CD4-positive, alpha-beta T cell (primary cell): ENCODE measurements at regions of chr4 and their contacts with region 1.

Region 1: DNA sequence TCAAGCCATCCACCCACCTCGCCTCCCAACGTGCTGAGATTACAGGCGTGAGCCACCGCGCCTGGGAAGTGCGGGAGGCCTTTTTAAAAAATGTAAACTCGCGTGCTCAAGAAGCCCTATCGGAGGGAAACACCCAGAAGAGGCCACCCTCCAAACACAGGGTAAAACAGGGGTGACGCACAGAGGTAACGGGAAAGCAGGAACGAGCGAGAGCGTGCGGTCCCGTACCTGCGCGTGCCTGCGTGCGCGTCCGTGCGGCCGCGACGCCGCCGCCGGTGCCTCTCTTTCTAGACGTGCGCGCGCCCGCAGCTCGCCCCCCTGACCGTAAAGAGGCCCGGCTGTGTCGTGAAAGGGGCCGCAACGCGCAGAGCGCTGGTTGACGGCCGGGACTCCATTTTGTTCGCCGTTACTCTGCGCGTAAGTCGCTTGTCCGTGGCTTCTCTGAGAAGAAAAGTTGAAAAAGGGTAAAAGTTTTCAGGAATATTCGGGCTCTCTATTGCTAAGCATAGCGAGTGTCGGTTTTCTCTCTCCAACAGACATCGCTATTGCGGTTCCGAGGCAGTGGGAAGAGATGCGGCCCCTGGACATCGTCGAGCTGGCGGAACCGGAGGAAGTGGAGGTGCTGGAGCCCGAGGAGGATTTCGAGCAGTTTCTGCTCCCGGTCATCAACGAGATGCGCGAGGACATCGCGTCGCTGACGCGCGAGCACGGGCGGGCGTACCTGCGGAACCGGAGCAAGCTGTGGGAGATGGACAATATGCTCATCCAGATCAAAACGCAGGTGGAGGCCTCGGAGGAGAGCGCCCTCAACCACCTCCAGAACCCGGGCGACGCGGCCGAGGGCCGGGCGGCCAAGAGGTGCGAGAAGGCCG is at the start of gene MRFAP1:
- DNase-seq: peak; percentile 90 to 99 (median 94)
- ATAC-seq: peak; percentile 78
- H3K4me3 ChIP-seq: peak within 1 kb of the TSS; percentile 77
- H3K4me3 Mint-ChIP-seq: peak within 1 kb of the TSS; percentile 100
- H3K27ac ChIP-seq: peak within 1 kb of the TSS; percentile 93 to 98
- H3K27ac Mint-ChIP-seq: peak within 1 kb of the TSS; percentile 99
- H3K4me1 ChIP-seq: peaks cover 38% of the 10 kb centered on the region
- H3K4me1 Mint-ChIP-seq: peaks cover 45% of the 10 kb centered on the region
- H3K27me3 ChIP-seq: no peaks in the 10 kb centered on the region
- H3K27me3 Mint-ChIP-seq: no peaks in the 10 kb centered on the region
- CTCF ChIP-seq: no peak
- total RNA-seq, gene MRFAP1: 172 to 181 TPM

Region 2: DNA sequence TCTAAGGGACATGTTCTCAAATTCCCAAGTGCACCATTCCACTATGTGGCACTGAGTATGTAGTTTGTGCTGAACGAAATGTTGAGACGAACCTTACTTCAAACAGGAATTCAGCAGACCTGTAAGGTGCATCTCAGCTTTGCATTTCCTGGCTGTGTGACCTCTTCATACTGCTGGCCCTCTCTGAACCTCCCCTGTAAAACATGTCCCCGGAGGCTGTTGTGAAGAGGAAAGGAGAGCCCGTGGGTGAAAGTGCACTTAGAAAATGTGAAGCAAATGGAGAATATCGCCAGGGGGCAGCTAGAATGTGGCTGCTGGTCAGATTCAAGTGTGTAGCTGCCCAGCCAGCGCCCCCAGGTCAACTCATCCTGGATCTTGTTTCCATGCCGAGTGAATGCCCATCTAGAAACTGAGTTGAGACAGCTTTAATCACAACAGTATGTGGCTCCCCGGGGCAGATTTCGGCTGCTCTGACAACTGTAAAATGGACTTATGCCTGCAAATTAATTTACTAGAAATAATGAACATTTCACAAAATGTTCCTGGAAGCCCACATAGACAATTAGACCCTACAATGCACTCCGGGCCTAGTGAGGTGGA is 1195.5 kb before region 1 on chr4:
- CTCF ChIA-PET with region 1: no interaction called
- POLR2A ChIA-PET with region 1: no interaction called
- intact Hi-C with region 1: no loop called
- DNase-seq: no peak
- ATAC-seq: no peak
- H3K4me3 ChIP-seq: no peak overlapping the region
- H3K4me3 Mint-ChIP-seq: no peak overlapping the region
- H3K27ac ChIP-seq: no peak overlapping the region
- H3K27ac Mint-ChIP-seq: no peak overlapping the region
- H3K4me1 ChIP-seq: no peaks in the 10 kb centered on the region
- H3K4me1 Mint-ChIP-seq: no peaks in the 10 kb centered on the region
- H3K27me3 ChIP-seq: no peaks in the 10 kb centered on the region
- H3K27me3 Mint-ChIP-seq: no peaks in the 10 kb centered on the region
- CTCF ChIP-seq: no peak

Region 3: GRCh38 chr4:6275351-6275750 is 365.2 kb before region 1 on chr4:
- CTCF ChIA-PET with region 1: no interaction called
- POLR2A ChIA-PET with region 1: no interaction called
- intact Hi-C with region 1: no loop called
- DNase-seq: no peak
- ATAC-seq: no peak
- H3K4me3 ChIP-seq: no peak overlapping the region
- H3K4me3 Mint-ChIP-seq: no peak overlapping the region
- H3K27ac ChIP-seq: no peak overlapping the region
- H3K27ac Mint-ChIP-seq: no peak overlapping the region
- H3K4me1 ChIP-seq: peaks cover 26% of the 10 kb centered on the region
- H3K4me1 Mint-ChIP-seq: peaks cover 16% of the 10 kb centered on the region
- H3K27me3 ChIP-seq: no peaks in the 10 kb centered on the region
- H3K27me3 Mint-ChIP-seq: no peaks in the 10 kb centered on the region
- CTCF ChIP-seq: no peak

Region 4: GRCh38 chr4:6452897-6453687 is 187.4 kb before region 1 on chr4:
- CTCF ChIA-PET with region 1: no interaction called
- POLR2A ChIA-PET with region 1: no interaction called
- intact Hi-C with region 1: no loop called
- DNase-seq: no peak
- ATAC-seq: no peak
- H3K4me3 ChIP-seq: no peak overlapping the region
- H3K4me3 Mint-ChIP-seq: no peak overlapping the region
- H3K27ac ChIP-seq: no peak overlapping the region
- H3K27ac Mint-ChIP-seq: no peak overlapping the region
- H3K4me1 ChIP-seq: no peaks in the 10 kb centered on the region
- H3K4me1 Mint-ChIP-seq: no peaks in the 10 kb centered on the region
- H3K27me3 ChIP-seq: peaks cover 0 to 4% of the 10 kb centered on the region in 2 experiments
- H3K27me3 Mint-ChIP-seq: peaks cover 33% of the 10 kb centered on the region
- CTCF ChIP-seq: no peak

Region 5: DNA sequence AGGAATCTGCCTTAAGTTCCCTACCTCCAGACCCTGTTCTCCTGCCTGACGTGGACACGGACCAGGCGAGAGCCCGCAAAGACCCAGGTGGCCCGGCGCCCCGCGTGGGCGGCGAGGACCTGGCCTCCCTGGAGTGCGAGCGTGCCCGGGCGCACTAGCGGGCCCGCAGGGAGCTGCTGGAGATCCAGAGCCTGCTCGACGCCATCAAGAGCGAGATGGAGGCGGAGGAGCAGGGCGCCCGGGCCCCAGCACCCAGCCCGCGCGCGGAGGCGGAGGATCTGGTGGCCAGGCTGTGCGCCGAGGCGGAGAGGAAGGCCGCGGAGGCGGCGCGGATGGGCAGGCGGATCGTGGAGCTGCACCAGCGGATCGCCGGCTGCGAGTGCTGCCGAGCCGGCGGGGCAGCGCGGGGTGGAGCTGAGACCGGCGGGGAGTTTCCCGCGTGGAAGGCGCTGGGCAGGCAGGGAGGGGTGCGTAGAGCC is 18.1 kb after region 1 on chr4:
- CTCF ChIA-PET with region 1: interaction called, 12 read pairs
- POLR2A ChIA-PET with region 1: interaction called, 56 read pairs
- intact Hi-C with region 1: no loop called
- DNase-seq: peak in 13 of 14 experiments; percentile 33 to 86 (median 50)
- ATAC-seq: peak; percentile 90
- H3K4me3 ChIP-seq: peak overlapping the region; percentile 48
- H3K4me3 Mint-ChIP-seq: peak overlapping the region; percentile 79
- H3K27ac ChIP-seq: no peak overlapping the region
- H3K27ac Mint-ChIP-seq: peak overlapping the region; percentile 27
- H3K4me1 ChIP-seq: peaks cover 20% of the 10 kb centered on the region
- H3K4me1 Mint-ChIP-seq: no peaks in the 10 kb centered on the region
- H3K27me3 ChIP-seq: peaks cover under 1 to 4% of the 10 kb centered on the region in 2 experiments
- H3K27me3 Mint-ChIP-seq: peaks cover 29% of the 10 kb centered on the region
- CTCF ChIP-seq: no peak

Region 6: GRCh38 chr4:6688879-6689505 is 48.5 kb after region 1 on chr4:
- CTCF ChIA-PET with region 1: no interaction called
- POLR2A ChIA-PET with region 1: interaction called, 34 read pairs
- intact Hi-C with region 1: no loop called
- DNase-seq: peak; percentile 48 to 85 (median 69)
- ATAC-seq: peak; percentile 75
- H3K4me3 ChIP-seq: peak overlapping the region; percentile 58
- H3K4me3 Mint-ChIP-seq: peak overlapping the region; percentile 89
- H3K27ac ChIP-seq: peak overlapping the region; percentile 34 to 82
- H3K27ac Mint-ChIP-seq: peak overlapping the region; percentile 91
- H3K4me1 ChIP-seq: peaks cover 90% of the 10 kb centered on the region
- H3K4me1 Mint-ChIP-seq: peaks cover 71% of the 10 kb centered on the region
- H3K27me3 ChIP-seq: no peaks in the 10 kb centered on the region
- H3K27me3 Mint-ChIP-seq: no peaks in the 10 kb centered on the region
- CTCF ChIP-seq: no peak

Region 7: GRCh38 chr4:6709230-6710114 is 68.9 kb after region 1 on chr4 and contains the start of gene MRFAP1L1:
- CTCF ChIA-PET with region 1: interaction called, 3 read pairs
- POLR2A ChIA-PET with region 1: interaction called, 76 read pairs
- intact Hi-C with region 1: loop called in 1 of 2 experiments (anchors 2 kb)
- DNase-seq: peak; percentile 94 to 98 (median 96)
- ATAC-seq: peak; percentile 87
- H3K4me3 ChIP-seq: peak within 1 kb of the TSS; percentile 74
- H3K4me3 Mint-ChIP-seq: peak within 1 kb of the TSS; percentile 99
- H3K27ac ChIP-seq: peak within 1 kb of the TSS; percentile 79 to 85
- H3K27ac Mint-ChIP-seq: peak within 1 kb of the TSS; percentile 97
- H3K4me1 ChIP-seq: peaks cover 40% of the 10 kb centered on the region
- H3K4me1 Mint-ChIP-seq: peaks cover 69% of the 10 kb centered on the region
- H3K27me3 ChIP-seq: no peaks in the 10 kb centered on the region
- H3K27me3 Mint-ChIP-seq: no peaks in the 10 kb centered on the region
- CTCF ChIP-seq: no peak
- total RNA-seq, gene MRFAP1L1: 26.6 to 27.0 TPM

Region 8: DNA sequence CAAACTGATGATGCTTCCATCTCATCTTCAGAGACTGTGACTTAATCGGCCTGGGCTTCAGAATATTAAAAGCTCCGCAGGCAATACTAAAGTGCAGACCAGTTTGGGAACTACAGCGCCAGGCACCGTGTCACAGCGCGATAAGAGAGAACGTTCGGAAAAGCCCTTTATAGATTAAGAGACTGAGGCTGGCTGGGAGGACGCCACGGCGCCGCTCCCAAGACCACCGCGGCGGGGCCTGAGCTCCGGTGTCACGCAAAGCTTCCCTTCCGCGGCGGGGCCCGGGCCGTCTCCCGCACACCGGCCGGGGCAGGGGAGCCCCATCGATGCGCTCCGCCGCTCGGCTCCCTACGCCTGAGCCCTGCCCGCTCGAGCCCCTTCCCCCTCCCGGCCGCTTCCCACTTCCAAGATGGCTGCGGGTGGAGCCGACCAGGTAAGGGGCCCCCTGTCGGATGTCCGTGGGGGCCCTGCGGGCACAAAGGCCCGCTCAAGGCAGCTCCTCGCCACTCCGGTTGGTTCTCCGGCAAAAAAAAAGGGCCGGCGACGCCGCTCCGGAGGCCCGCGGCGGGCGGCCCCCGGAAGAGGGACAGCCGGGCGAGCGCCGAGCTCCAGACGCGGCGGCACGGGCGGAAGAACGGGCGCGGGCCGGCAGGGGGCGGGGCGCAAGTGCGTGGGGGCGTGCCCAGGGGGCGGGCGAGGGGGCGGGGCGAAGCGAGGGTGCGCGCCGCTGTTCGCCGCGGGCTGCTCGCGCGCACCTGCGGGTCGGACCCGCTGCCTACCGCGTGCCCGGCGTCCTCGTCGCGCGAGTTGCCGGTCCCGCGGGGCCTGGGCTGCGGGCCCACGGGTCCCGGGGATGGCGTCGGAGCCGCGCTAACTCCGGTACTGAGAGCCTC is 268.8 kb after region 1 on chr4 and contains the start of gene TBC1D14:
- CTCF ChIA-PET with region 1: no interaction called
- POLR2A ChIA-PET with region 1: interaction called, 16 read pairs
- intact Hi-C with region 1: loop called in 1 of 2 experiments (anchors 1 kb)
- DNase-seq: peak; percentile 77 to 93 (median 84)
- ATAC-seq: peak; percentile 88
- H3K4me3 ChIP-seq: peak within 1 kb of the TSS; percentile 91
- H3K4me3 Mint-ChIP-seq: peak within 1 kb of the TSS; percentile 96
- H3K27ac ChIP-seq: peak within 1 kb of the TSS; percentile 92 to 96
- H3K27ac Mint-ChIP-seq: peak within 1 kb of the TSS; percentile 90
- H3K4me1 ChIP-seq: peaks cover 61% of the 10 kb centered on the region
- H3K4me1 Mint-ChIP-seq: peaks cover 48% of the 10 kb centered on the region
- H3K27me3 ChIP-seq: no peaks in the 10 kb centered on the region
- H3K27me3 Mint-ChIP-seq: no peaks in the 10 kb centered on the region
- CTCF ChIP-seq: no peak
- total RNA-seq, gene TBC1D14: 31.2 to 34.1 TPM

Region 9: GRCh38 chr4:7042697-7043464 is 402.4 kb after region 1 on chr4 and contains the start of gene TADA2B:
- CTCF ChIA-PET with region 1: interaction called, 5 read pairs
- POLR2A ChIA-PET with region 1: interaction called, 11 read pairs
- intact Hi-C with region 1: no loop called
- DNase-seq: peak; percentile 72 to 97 (median 89)
- ATAC-seq: peak; percentile 76
- H3K4me3 ChIP-seq: peak within 1 kb of the TSS; percentile 87
- H3K4me3 Mint-ChIP-seq: peak within 1 kb of the TSS; percentile 93
- H3K27ac ChIP-seq: peak within 1 kb of the TSS; percentile 44 to 81
- H3K27ac Mint-ChIP-seq: peak within 1 kb of the TSS; percentile 82
- H3K4me1 ChIP-seq: peaks cover 55% of the 10 kb centered on the region
- H3K4me1 Mint-ChIP-seq: peaks cover 57% of the 10 kb centered on the region
- H3K27me3 ChIP-seq: no peaks in the 10 kb centered on the region
- H3K27me3 Mint-ChIP-seq: no peaks in the 10 kb centered on the region
- CTCF ChIP-seq: peak; percentile 22
- total RNA-seq, gene TADA2B: 41.5 to 44.6 TPM